ENCODE measurements at regions of chr19 and their contacts with region 1.

Region 1: DNA sequence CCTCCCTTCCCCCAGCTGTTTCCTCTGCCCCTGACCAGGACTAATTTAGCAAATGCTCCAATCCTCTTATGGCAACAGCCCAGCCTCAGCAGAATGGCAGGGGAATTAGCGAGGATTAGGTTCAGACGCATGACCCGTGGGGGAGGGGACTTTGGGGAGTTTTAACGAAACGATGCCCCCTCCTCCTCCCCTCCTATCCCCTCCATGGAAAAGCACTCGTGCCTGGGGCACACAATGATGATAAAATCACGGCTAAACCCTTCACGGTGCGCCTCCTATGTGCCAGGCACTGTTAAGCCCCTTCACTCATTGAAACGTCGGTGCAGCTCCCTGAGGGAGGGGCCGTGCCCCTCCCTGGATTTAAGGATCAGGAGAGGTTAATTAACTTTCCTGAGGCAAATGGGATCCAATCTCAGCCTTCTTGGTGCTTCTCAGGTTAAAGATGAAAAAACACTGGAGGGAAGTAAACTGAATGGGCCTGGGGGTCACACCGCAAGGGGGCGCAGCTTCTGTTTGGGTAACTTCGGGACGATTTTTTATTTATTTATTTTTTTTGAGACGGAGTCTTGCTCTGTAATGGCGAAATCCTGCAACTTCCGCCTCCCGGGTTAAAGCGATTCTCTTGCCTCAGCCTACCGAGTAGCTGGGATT is 10.1 kb upstream of the TPRX2 start:
- DNase-seq: peak; percentile 85
- ATAC-seq: peak; percentile 19
- H3K4me3 Mint-ChIP-seq: peak overlapping the region; percentile 69
- H3K27ac Mint-ChIP-seq: peak overlapping the region; percentile 98
- H3K4me1 Mint-ChIP-seq: peaks cover 35% of the 10 kb centered on the region
- H3K27me3 Mint-ChIP-seq: no peaks in the 10 kb centered on the region
- CTCF ChIP-seq: peak; percentile 82

Region 2: GRCh38 chr19:47745010-47745901 is 103.7 kb before region 1 on chr19 and contains the start of gene NOP53:
- CTCF ChIA-PET with region 1: interaction called, 3 read pairs
- POLR2A ChIA-PET with region 1: interaction called, 10 read pairs
- DNase-seq: peak; percentile 95
- ATAC-seq: peak; percentile 69
- H3K4me3 Mint-ChIP-seq: peak within 1 kb of the TSS; percentile 97
- H3K27ac Mint-ChIP-seq: peak within 1 kb of the TSS; percentile 97
- H3K4me1 Mint-ChIP-seq: peaks cover 13% of the 10 kb centered on the region
- H3K27me3 Mint-ChIP-seq: no peaks in the 10 kb centered on the region; the same call in 1 of the 2 replicates
- CTCF ChIP-seq: no peak
- total RNA-seq, gene NOP53: 289 to 315 TPM (median 310 TPM) in 3 replicates

Region 3: GRCh38 chr19:47790398-47790814 is 58.5 kb before region 1 on chr19:
- CTCF ChIA-PET with region 1: interaction called, 22 read pairs
- POLR2A ChIA-PET with region 1: interaction called, 4 read pairs
- DNase-seq: peak; percentile 100
- ATAC-seq: peak; percentile 91
- H3K4me3 Mint-ChIP-seq: peak overlapping the region; percentile 25; the same call in 1 of the 2 replicates
- H3K27ac Mint-ChIP-seq: peak overlapping the region; percentile 57; the same call in 1 of the 2 replicates
- H3K4me1 Mint-ChIP-seq: peaks cover 10% of the 10 kb centered on the region
- H3K27me3 Mint-ChIP-seq: no peaks in the 10 kb centered on the region
- CTCF ChIP-seq: peak; percentile 85

Region 4: DNA sequence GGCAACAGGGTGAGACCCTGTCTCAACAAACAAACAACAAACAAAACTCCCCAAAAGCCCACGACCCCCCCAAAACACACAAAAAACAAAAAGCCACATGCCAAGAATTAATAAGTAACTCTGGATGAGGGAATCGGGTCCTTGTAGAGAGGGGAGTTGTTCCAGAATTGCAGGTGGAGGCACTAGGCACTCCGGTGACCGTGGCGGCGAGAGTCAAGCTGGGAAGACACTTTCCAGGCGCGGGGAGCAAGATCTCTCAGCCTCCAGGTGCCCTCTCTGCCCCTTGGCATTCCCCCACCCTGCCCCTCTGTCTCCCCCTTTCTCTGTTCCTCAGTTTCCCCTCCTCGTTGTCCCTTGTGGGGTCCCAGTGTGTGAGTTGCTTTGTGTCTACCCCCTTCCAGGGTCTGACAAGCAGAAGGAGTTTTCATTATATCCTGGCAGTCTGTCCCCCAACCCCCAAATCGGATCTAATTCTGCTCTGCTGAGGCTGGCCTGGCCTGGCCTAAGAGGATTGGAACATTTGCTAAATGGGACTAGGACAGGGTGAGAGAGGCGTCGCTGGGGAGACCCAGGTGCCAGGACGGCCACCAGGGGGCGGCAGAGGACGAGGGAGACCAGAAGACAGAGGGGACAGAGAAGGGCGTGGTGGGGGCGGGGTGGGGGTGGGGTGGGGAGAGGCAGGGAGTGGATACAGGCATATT is 35.5 kb before region 1 on chr19:
- CTCF ChIA-PET with region 1: interaction called, 23 read pairs
- POLR2A ChIA-PET with region 1: no interaction called
- DNase-seq: peak; percentile 98
- ATAC-seq: peak; percentile 98
- H3K4me3 Mint-ChIP-seq: no peak overlapping the region
- H3K27ac Mint-ChIP-seq: no peak overlapping the region
- H3K4me1 Mint-ChIP-seq: peaks cover 6% of the 10 kb centered on the region; the same call in 1 of the 2 replicates
- H3K27me3 Mint-ChIP-seq: no peaks in the 10 kb centered on the region
- CTCF ChIP-seq: peak; percentile 84

Region 5: DNA sequence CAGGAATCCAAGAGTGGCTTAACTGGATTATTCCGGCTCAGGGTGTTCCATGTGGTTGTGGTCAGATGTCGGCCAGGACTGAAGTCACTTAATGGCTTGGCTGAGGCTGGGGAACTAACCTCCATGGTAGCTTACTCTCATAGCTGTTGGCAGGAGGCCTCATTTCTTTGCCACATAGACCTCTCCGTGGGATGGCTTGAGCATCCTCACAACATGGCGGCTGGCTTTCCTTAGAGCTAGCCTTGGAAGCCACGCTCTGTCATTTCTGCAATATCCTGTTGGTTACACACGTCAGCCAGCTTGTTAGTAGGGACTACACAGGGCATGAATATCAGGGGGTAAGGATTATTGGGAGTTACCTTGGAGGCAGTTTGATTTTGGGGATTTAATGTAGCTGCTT is 22.1 kb before region 1 on chr19:
- CTCF ChIA-PET with region 1: interaction called, 28 read pairs
- POLR2A ChIA-PET with region 1: interaction called, 4 read pairs
- DNase-seq: no peak
- ATAC-seq: no peak
- H3K4me3 Mint-ChIP-seq: no peak overlapping the region
- H3K27ac Mint-ChIP-seq: no peak overlapping the region
- H3K4me1 Mint-ChIP-seq: peaks cover 17% of the 10 kb centered on the region
- H3K27me3 Mint-ChIP-seq: peaks cover 3% of the 10 kb centered on the region; the same call in 1 of the 2 replicates
- CTCF ChIP-seq: no peak

Region 6: DNA sequence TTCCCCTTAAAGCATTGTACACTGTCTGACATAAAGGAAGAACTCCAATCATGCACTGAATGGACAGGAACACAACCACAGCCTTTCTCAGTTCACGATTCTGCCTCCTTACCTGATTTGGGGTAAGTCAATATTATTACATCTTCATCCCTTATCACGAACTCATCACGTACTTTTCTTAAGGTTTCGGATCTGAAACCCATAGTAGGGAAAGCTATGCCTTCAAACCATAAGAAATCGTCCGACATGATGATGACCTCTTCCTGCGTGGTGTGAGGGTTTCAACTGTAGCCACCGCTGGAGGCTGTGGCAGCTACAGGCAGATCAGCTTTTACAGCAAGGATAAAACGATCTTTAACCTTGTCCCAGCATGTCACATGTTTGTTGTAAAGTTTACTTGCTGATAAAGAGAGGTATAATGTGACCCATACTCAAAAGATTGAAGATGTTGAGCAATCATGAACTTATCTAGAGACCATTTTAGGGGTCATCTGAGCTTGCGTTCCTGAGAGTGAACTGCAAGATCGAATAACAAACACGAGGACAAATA is 37.1 kb after region 1 on chr19 and contains the start of gene SULT2A1:
- CTCF ChIA-PET with region 1: no interaction called
- POLR2A ChIA-PET with region 1: no interaction called
- DNase-seq: no peak
- ATAC-seq: no peak
- H3K4me3 Mint-ChIP-seq: no peak within 1 kb of the TSS
- H3K27ac Mint-ChIP-seq: no peak within 1 kb of the TSS
- H3K4me1 Mint-ChIP-seq: peaks cover 6% of the 10 kb centered on the region; the same call in 1 of the 2 replicates
- H3K27me3 Mint-ChIP-seq: no peaks in the 10 kb centered on the region
- CTCF ChIP-seq: no peak
- total RNA-seq, gene SULT2A1: 0.18 to 0.32 TPM (median 0.31 TPM) in 3 replicates

Region 7: GRCh38 chr19:47901370-47901769 is 52.4 kb after region 1 on chr19:
- CTCF ChIA-PET with region 1: no interaction called
- POLR2A ChIA-PET with region 1: no interaction called
- DNase-seq: no peak
- ATAC-seq: no peak
- H3K4me3 Mint-ChIP-seq: no peak overlapping the region
- H3K27ac Mint-ChIP-seq: no peak overlapping the region
- H3K4me1 Mint-ChIP-seq: peaks cover 5% of the 10 kb centered on the region
- H3K27me3 Mint-ChIP-seq: no peaks in the 10 kb centered on the region
- CTCF ChIP-seq: no peak

Measured in WTC11 (cell line).